CD4-positive, alpha-beta T cell (primary cell): ENCODE measurements at regions of chr3 and their contacts with region 1.

Region 1: GRCh38 chr3:53160660-53161449 is at the start of gene PRKCD:
- DNase-seq: peak; percentile 61 to 94 (median 78)
- ATAC-seq: peak; percentile 78
- H3K4me3 ChIP-seq: peak within 1 kb of the TSS; percentile 98
- H3K4me3 Mint-ChIP-seq: peak within 1 kb of the TSS; percentile 90
- H3K27ac ChIP-seq: peak within 1 kb of the TSS; percentile 47 to 58
- H3K27ac Mint-ChIP-seq: peak within 1 kb of the TSS; percentile 79
- H3K4me1 ChIP-seq: peaks cover 38% of the 10 kb centered on the region
- H3K4me1 Mint-ChIP-seq: peaks cover 22% of the 10 kb centered on the region
- H3K27me3 ChIP-seq: peaks cover 10 to 12% of the 10 kb centered on the region in 2 experiments
- H3K27me3 Mint-ChIP-seq: peaks cover 3% of the 10 kb centered on the region
- CTCF ChIP-seq: peak; percentile 41
- total RNA-seq, gene PRKCD: 18.1 to 20.1 TPM

Region 2: GRCh38 chr3:53130179-53131061 is 30.4 kb before region 1 on chr3 and contains the start of gene RFT1:
- CTCF ChIA-PET with region 1: interaction called, 12 read pairs
- POLR2A ChIA-PET with region 1: interaction called, 16 read pairs
- intact Hi-C with region 1: loop called in 1 of 2 experiments (anchors 1 kb)
- DNase-seq: peak; percentile 94 to 100 (median 98)
- ATAC-seq: peak; percentile 92
- H3K4me3 ChIP-seq: peak within 1 kb of the TSS; percentile 80
- H3K4me3 Mint-ChIP-seq: peak within 1 kb of the TSS; percentile 92
- H3K27ac ChIP-seq: peak within 1 kb of the TSS; percentile 93 to 95
- H3K27ac Mint-ChIP-seq: peak within 1 kb of the TSS; percentile 98
- H3K4me1 ChIP-seq: peaks cover 31% of the 10 kb centered on the region
- H3K4me1 Mint-ChIP-seq: peaks cover 26% of the 10 kb centered on the region
- H3K27me3 ChIP-seq: no peaks in the 10 kb centered on the region
- H3K27me3 Mint-ChIP-seq: no peaks in the 10 kb centered on the region
- CTCF ChIP-seq: no peak
- total RNA-seq, gene RFT1: 8.5 to 10.2 TPM